ENCODE measurements at regions of chr2 and their contacts with region 1.

Region 1: GRCh38 chr2:44906972-44907371 is 34.5 kb upstream of the SIX3 start:
- DNase-seq: no peak
- H3K4me3 ChIP-seq: no peak overlapping the region
- H3K27ac ChIP-seq: no peak overlapping the region
- H3K4me1 ChIP-seq: no peaks in the 10 kb centered on the region
- H3K27me3 ChIP-seq: no peaks in the 10 kb centered on the region
- CTCF ChIP-seq: no peak
- EP300 ChIP-seq: no peak
- POLR2A ChIP-seq: no peak

Region 2: DNA sequence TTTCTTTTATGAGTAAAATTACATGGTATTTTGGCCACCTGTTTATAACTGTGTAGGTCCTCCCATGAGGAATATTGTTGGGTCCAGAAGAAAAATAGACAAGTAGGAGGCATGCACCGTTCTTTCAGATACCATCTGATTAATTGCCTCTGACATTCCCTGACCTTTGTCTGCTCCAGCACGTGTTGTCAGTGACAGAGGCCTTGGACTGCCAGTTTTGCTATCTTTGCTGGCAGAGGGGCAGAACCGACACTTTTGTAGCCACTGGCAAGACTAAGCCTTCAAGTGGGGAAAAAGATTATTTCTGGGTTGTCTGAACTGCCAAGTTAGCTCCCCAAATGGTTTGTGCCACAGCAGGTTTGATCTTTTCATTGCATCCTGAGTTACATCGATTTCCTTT is 268.3 kb before region 1 on chr2:
- intact Hi-C with region 1: loop called in 1 of 4 experiments (anchors 5 kb)
- DNase-seq: no peak
- H3K4me3 ChIP-seq: no peak overlapping the region
- H3K27ac ChIP-seq: no peak overlapping the region
- H3K4me1 ChIP-seq: no peaks in the 10 kb centered on the region
- H3K27me3 ChIP-seq: no peaks in the 10 kb centered on the region
- CTCF ChIP-seq: no peak
- EP300 ChIP-seq: no peak
- POLR2A ChIP-seq: no peak

Region 3: GRCh38 chr2:45458909-45459563 is 552.1 kb after region 1 on chr2:
- intact Hi-C with region 1: no loop called
- DNase-seq: peak in 1 of 5 donors; percentile 20
- H3K4me3 ChIP-seq: no peak overlapping the region
- H3K27ac ChIP-seq: no peak overlapping the region
- H3K4me1 ChIP-seq: no peaks in the 10 kb centered on the region
- H3K27me3 ChIP-seq: no peaks in the 10 kb centered on the region
- CTCF ChIP-seq: no peak
- EP300 ChIP-seq: no peak
- POLR2A ChIP-seq: no peak

Region 4: GRCh38 chr2:46689993-46690392 is 1783.0 kb after region 1 on chr2:
- intact Hi-C with region 1: no loop called
- DNase-seq: no peak
- H3K4me3 ChIP-seq: no peak overlapping the region
- H3K27ac ChIP-seq: no peak overlapping the region
- H3K4me1 ChIP-seq: no peaks in the 10 kb centered on the region
- H3K27me3 ChIP-seq: no peaks in the 10 kb centered on the region
- CTCF ChIP-seq: no peak
- EP300 ChIP-seq: no peak
- POLR2A ChIP-seq: no peak